Pancreas (tissue), 10 donors: ENCODE measurements at regions of chr4 and their contacts with region 1.

Region 1: DNA sequence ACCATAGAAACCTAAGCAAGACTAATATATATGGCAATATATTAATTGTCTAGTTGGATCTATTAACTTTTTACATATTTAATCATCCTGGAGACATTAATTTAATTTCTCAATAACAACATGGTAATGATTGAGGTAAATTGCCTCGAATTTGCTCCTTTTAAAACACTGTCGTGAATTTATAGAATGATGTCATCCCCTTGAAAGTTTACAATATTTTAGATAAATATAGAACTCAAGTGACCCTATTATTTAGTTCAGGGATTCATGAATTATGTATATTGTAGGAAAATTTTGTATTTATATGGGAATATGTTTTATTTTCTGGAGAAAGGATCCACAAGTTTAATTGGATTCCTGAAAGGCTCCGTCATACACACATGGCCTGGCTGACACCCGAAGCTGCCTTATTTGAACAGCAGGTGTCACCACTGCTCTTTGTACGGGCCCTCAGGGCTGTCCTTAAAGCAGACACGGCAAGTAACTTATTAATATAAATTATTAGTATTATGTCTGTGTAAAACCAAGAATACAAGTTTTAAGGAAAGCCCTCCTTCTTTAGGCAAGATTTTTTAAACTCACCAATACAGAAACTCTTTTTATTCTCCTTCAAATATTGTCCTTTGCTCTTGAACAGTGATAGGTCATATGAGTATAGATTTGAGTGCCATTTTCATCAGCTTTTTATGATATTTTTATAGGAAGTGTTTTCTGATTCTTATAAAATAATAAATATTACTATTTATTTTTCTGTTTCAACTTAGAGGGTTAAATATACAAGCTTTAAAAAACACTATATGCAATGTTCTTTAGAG is 1.9 kb upstream of the PLRG1 start:
- DNase-seq: peak; percentile 57 to 82 (median 68)
- ATAC-seq: peak; percentile 70 to 84 (median 78)
- H3K4me3 ChIP-seq: no peak overlapping the region
- H3K27ac ChIP-seq: no peak overlapping the region
- H3K4me1 ChIP-seq: peaks cover 0 to 11% (median 7%) of the 10 kb centered on the region in 3 donors
- H3K27me3 ChIP-seq: no peaks in the 10 kb centered on the region
- CTCF ChIP-seq: peak; percentile 18 to 68 (median 58)

Region 2: GRCh38 chr4:154164931-154165839 is 386.9 kb before region 1 on chr4:
- intact Hi-C with region 1: no loop called
- DNase-seq: peak in 1 of 6 donors; percentile 18
- ATAC-seq: peak in 3 of 4 donors; percentile 26 to 69 (median 67)
- H3K4me3 ChIP-seq: no peak overlapping the region
- H3K27ac ChIP-seq: no peak overlapping the region
- H3K4me1 ChIP-seq: no peaks in the 10 kb centered on the region
- H3K27me3 ChIP-seq: no peaks in the 10 kb centered on the region
- CTCF ChIP-seq: no peak

Region 3: GRCh38 chr4:154622416-154622997 is 70.4 kb after region 1 on chr4:
- intact Hi-C with region 1: loop called in 2 of 3 experiments (anchors 2 to 5 kb)
- DNase-seq: peak in 1 of 6 donors; percentile 30
- ATAC-seq: peak; percentile 47 to 73 (median 66)
- H3K4me3 ChIP-seq: no peak overlapping the region
- H3K27ac ChIP-seq: no peak overlapping the region
- H3K4me1 ChIP-seq: peaks cover 0 to 7% (median 5%) of the 10 kb centered on the region in 3 donors
- H3K27me3 ChIP-seq: no peaks in the 10 kb centered on the region
- CTCF ChIP-seq: peak; percentile 10 to 53 (median 36)

Region 4: DNA sequence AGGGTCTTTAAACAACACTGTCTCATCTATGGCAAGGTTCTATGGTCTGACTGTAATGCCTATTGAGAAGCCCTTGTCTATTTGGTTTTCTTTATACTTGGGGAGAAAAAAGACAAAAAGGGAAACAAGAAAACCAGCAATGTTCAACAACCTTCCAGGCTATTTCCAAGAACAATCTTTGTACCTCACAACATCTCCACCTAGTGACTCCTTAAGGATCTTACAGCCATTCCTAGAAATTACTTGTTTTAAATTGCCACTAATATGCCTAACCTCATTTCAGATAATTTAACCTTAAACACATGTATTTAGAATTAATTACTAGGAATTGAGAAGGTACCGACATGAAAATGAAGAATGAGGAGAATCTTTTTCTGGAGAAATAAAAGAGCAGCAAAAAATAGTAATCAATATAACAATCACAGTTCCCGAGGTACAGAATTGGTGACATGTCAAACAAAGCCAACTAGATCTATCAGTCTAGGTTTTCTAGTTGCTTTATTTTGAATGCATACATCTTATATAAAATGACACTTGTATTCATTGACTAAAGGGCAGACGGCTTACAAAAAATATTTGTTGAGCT is 227.4 kb after region 1 on chr4:
- intact Hi-C with region 1: loop called in 1 of 3 experiments (anchors 10 kb)
- DNase-seq: no peak
- ATAC-seq: peak; percentile 63 to 83 (median 79)
- H3K4me3 ChIP-seq: no peak overlapping the region
- H3K27ac ChIP-seq: no peak overlapping the region
- H3K4me1 ChIP-seq: no peaks in the 10 kb centered on the region
- H3K27me3 ChIP-seq: peaks cover 0 to 6% (median 0%) of the 10 kb centered on the region in 4 donors
- CTCF ChIP-seq: peak; percentile 6 to 46 (median 42)